ENCODE measurements at regions of chr9 and their contacts with region 1.

Region 1: DNA sequence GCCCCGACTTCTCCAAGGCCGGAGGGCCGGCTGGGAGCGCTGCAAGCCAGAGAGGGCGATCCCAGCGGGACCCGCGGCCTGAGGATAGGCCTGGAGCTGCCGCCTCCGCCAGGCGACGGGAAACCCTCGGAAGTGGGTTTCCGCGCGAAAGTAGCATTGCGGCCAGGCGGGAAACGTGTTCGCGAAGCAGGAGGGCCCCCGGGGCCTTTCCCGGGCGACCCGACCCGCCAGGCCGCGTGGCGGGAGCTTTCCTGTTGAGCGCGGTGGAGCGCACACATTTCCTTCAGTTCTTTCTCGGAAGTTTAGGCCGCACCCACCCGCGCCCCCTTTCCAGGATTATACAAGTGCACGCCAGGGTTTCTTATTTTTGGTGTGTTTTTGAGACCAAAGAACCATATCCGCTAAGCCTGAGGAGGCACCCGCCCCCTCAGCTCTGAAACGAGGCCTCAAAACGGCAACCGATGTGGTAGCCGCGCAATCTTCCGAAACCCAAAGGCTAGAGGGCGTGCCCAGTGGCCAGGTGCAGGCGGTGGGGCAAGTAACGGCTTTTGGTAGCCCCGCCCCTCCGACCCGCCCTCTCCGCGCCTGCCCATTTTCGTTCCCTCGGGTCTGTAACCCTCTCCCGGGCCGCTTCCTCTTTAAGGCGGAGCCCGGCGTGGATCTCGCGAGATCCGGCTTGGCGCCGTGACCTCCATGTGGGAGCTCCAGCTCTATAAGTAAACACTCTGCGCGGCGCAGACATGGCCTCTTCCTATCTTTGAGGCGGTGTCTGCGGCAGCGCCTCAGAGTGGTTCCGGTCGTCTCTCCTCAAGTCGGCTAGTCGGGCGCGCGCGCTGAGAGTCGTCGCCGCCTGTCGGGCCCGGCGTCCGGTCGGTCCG is at the start of gene UHRF2:
- DNase-seq: peak; percentile 100
- H3K4me3 Mint-ChIP-seq: peak within 1 kb of the TSS; percentile 81
- H3K27ac Mint-ChIP-seq: peak within 1 kb of the TSS; percentile 94
- H3K4me1 Mint-ChIP-seq: peaks cover 35% of the 10 kb centered on the region
- H3K27me3 Mint-ChIP-seq: peaks cover 2% of the 10 kb centered on the region
- total RNA-seq, gene UHRF2: 77.3 to 77.9 TPM

Region 2: GRCh38 chr9:6008169-6008979 is 404.4 kb before region 1 on chr9:
- CTCF ChIA-PET with region 1: no interaction called
- POLR2A ChIA-PET with region 1: interaction called, 16 read pairs
- DNase-seq: peak; percentile 95
- H3K4me3 Mint-ChIP-seq: peak overlapping the region; percentile 74
- H3K27ac Mint-ChIP-seq: peak overlapping the region; percentile 78
- H3K4me1 Mint-ChIP-seq: peaks cover 73% of the 10 kb centered on the region
- H3K27me3 Mint-ChIP-seq: no peaks in the 10 kb centered on the region

Region 3: GRCh38 chr9:6239048-6239461 is 173.7 kb before region 1 on chr9:
- CTCF ChIA-PET with region 1: no interaction called
- POLR2A ChIA-PET with region 1: no interaction called
- DNase-seq: no peak
- H3K4me3 Mint-ChIP-seq: no peak overlapping the region
- H3K27ac Mint-ChIP-seq: no peak overlapping the region
- H3K4me1 Mint-ChIP-seq: no peaks in the 10 kb centered on the region
- H3K27me3 Mint-ChIP-seq: peaks cover 13% of the 10 kb centered on the region

Region 4: DNA sequence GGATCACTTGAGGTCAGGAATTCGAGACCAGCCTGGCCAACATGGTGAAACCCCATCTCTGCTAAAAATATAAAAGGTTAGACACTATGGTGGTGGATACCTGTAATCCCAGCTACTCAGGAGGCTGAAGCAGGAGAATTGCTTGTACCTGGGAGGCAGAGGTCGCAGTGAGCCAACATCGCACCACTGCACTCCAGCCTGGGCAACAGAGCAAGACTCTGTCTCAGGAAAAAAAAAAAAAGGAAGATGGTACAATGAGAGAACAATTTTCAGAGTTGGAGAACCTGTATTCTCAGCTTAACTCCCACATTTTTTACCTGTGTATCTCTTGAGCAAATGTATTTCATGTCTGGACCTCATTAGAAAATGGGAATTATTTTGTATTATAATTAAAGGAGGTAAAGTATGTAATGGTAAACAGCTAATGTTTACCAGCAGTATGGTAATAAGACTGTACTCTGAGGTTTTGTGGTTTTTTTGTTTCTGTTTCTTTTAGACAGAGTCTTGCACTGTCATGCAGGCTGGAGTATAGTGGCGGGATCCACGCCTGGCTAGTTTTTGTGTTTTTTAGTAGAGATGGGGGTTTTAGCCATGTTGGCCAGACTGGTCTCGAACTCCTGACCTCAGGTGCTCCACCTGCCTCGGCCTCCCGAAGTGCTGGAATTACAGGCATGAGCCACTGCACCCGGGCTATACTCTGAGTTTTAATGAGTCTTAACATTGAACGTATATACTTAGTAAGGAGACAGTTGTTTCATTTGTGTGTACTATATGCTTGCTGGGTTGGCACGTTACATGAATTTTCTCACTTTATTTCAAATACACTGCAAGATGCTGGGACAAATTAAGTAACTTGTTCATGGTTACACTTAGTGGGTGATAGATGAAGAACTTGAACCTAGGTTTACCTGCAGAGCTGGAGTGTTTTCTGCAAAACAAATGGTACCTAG is 16.5 kb after region 1 on chr9:
- CTCF ChIA-PET with region 1: interaction called, 27 read pairs
- POLR2A ChIA-PET with region 1: interaction called, 200 read pairs
- DNase-seq: peak; percentile 43
- H3K4me3 Mint-ChIP-seq: peak overlapping the region; percentile 55
- H3K27ac Mint-ChIP-seq: peak overlapping the region; percentile 73
- H3K4me1 Mint-ChIP-seq: peaks cover 84% of the 10 kb centered on the region
- H3K27me3 Mint-ChIP-seq: no peaks in the 10 kb centered on the region

Region 5: DNA sequence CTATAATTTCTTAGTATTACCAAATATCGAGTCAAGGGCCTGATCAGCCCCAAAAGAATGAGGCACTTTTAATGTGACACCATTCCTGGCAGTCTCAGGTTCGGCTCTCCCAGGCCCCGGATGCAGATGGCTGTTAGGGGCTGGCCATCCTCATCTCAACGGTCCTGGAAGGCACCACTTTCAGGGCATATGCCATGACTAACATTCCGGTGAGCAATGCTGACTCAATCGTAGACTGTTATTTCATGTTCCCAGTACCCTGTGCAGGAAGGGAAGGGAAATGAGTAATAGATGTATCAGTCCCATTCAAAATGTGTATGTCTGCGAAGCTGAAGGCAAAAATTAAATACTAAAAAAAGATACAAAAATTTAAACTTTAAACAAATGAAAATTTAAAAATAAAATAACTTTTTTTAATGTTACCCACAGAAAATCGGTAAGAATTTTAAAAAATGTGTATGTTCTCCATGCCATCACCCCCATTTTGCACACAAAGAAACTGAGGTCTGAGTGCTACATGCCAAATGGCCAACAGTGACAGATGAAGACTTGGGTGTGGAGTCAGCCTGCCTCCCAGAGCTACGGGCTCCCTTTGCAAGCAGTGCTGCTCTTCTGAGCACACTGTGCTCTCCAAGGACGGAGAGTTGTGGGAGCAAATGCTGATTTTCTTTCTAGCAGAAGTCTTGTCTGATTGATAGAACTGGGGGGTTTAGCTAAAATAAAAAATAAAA is 153.8 kb after region 1 on chr9:
- CTCF ChIA-PET with region 1: interaction called, 11 read pairs
- POLR2A ChIA-PET with region 1: interaction called, 6 read pairs
- DNase-seq: peak; percentile 72
- H3K4me3 Mint-ChIP-seq: peak overlapping the region; percentile 54
- H3K27ac Mint-ChIP-seq: peak overlapping the region; percentile 93
- H3K4me1 Mint-ChIP-seq: peaks cover 33% of the 10 kb centered on the region
- H3K27me3 Mint-ChIP-seq: no peaks in the 10 kb centered on the region

Region 6: DNA sequence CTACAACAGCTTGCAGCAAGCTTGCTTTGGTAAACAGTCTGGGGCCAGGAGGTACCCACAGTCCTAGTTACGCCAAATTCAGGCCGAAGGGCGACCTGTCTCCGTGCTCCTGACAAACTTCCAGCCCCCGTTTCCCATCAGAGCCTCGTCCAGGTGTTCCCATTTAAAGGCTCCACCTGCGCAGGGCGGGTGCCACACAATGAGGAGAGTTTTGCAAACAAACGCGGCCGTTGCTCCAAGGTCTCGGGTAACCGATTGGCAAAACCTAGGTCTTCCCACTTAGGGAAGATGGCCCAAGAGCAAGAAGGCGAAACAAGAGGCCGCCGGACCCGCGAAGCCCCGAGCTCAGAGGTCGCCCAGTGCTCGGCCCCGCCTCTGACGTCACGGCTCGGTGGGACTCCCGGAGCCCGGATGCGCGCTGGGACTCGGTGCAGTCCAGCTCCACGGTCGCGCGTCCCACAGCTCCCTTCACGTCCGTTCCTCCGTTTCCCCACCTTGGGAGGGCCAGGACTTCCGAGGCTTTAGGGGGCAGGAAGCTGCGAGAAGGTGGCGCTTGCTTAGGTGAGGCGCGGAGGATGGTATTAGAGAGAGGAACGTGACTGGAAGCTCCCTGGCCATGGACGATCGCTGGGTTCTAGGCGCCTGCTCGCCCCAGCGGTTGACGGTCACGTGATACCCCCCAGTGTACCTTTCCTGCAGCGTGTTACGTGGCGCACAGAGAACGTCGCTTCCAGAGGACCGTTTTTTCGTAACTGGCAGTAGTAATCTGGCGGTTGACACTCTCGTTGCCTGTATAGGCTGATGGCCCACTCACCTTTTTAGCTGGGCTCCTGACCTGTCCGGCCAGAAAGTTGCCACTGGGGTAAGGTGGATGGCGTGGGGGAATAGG is 303.3 kb after region 1 on chr9:
- CTCF ChIA-PET with region 1: no interaction called
- POLR2A ChIA-PET with region 1: interaction called, 15 read pairs
- DNase-seq: peak; percentile 81
- H3K4me3 Mint-ChIP-seq: peak overlapping the region; percentile 85
- H3K27ac Mint-ChIP-seq: peak overlapping the region; percentile 79
- H3K4me1 Mint-ChIP-seq: peaks cover 13% of the 10 kb centered on the region
- H3K27me3 Mint-ChIP-seq: peaks cover 3% of the 10 kb centered on the region